CD14-positive monocyte (primary cell): ENCODE measurements at regions of chr19 and their contacts with region 1.

Region 1: GRCh38 chr19:17215125-17215971 is at the start of gene USE1:
- DNase-seq: peak; percentile 91 to 92 (median 91)
- H3K4me3 ChIP-seq: peak within 1 kb of the TSS; percentile 49 to 79 (median 79)
- H3K4me3 Mint-ChIP-seq: peak within 1 kb of the TSS; percentile 81 to 87
- H3K27ac ChIP-seq: peak within 1 kb of the TSS; percentile 86 to 94
- H3K27ac Mint-ChIP-seq: peak within 1 kb of the TSS; percentile 84 to 96 (median 95)
- H3K4me1 ChIP-seq: peaks cover 22 to 25% of the 10 kb centered on the region in 2 donors
- H3K4me1 Mint-ChIP-seq: peaks cover 21% of the 10 kb centered on the region
- H3K27me3 ChIP-seq: no peaks in the 10 kb centered on the region
- H3K27me3 Mint-ChIP-seq: no peaks in the 10 kb centered on the region
- CTCF ChIP-seq: no peak
- polyA plus RNA-seq, gene USE1: 26.5 to 39.8 (median 29.7) TPM

Region 2: GRCh38 chr19:17226002-17226933 is 10.9 kb after region 1 on chr19 and contains the start of gene OCEL1:
- intact Hi-C with region 1: loop called in 1 of 2 experiments (anchors 1 kb)
- DNase-seq: peak; percentile 98
- H3K4me3 ChIP-seq: peak within 1 kb of the TSS; percentile 52 to 88 (median 74)
- H3K4me3 Mint-ChIP-seq: peak within 1 kb of the TSS; percentile 92 to 97
- H3K27ac ChIP-seq: peak within 1 kb of the TSS; percentile 79 to 90
- H3K27ac Mint-ChIP-seq: peak within 1 kb of the TSS; percentile 94 to 99 (median 97)
- H3K4me1 ChIP-seq: peaks cover 24 to 38% of the 10 kb centered on the region in 2 donors
- H3K4me1 Mint-ChIP-seq: peaks cover 22% of the 10 kb centered on the region
- H3K27me3 ChIP-seq: no peaks in the 10 kb centered on the region
- H3K27me3 Mint-ChIP-seq: peaks cover 0 to 3% (median 0%) of the 10 kb centered on the region in 3 donors
- CTCF ChIP-seq: no peak
- polyA plus RNA-seq, gene OCEL1: 31.8 to 59.9 (median 57.6) TPM